ENCODE measurements at regions of chr20 and their contacts with region 1.

Region 1: DNA sequence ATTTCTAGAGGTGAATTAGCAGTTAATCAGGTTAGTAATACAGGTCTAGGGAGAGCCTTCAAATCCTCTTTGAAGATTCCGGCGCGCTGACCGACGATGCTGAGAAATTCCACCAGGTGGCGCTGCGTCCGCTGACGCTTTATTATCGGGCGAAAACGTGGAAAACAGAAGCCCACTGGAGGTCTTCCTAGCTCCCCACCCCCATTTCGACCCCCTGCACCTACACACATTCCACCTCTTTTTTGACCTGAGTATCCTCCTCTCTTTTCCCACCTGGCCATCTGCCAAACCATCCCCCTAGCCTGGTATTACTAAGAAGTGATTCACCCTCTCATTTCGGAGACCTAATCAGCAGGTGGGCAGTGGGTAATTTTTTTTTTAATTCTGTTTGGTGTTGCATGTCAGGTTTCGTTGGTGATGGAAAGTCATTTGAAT is 65.4 kb upstream of the RIN2 start:
- DNase-seq: peak; percentile 77
- ATAC-seq: peak; percentile 62
- H3K4me3 ChIP-seq: no peak overlapping the region
- H3K27ac ChIP-seq: no peak overlapping the region
- H3K4me1 ChIP-seq: peaks cover 2% of the 10 kb centered on the region
- H3K27me3 ChIP-seq: no peaks in the 10 kb centered on the region
- CTCF ChIP-seq: peak; percentile 93

Region 2: GRCh38 chr20:19583532-19584175 is 109.0 kb before region 1 on chr20:
- intact Hi-C with region 1: no loop called
- DNase-seq: peak; percentile 87
- ATAC-seq: peak; percentile 97
- H3K4me3 ChIP-seq: no peak overlapping the region
- H3K27ac ChIP-seq: no peak overlapping the region
- H3K4me1 ChIP-seq: no peaks in the 10 kb centered on the region
- H3K27me3 ChIP-seq: no peaks in the 10 kb centered on the region
- CTCF ChIP-seq: peak; percentile 87

Region 3: GRCh38 chr20:19742974-19743639 is 50.4 kb after region 1 on chr20:
- intact Hi-C with region 1: loop called (anchors 10 kb)
- DNase-seq: peak; percentile 67
- ATAC-seq: peak; percentile 78
- H3K4me3 ChIP-seq: no peak overlapping the region
- H3K27ac ChIP-seq: no peak overlapping the region
- H3K4me1 ChIP-seq: no peaks in the 10 kb centered on the region
- H3K27me3 ChIP-seq: no peaks in the 10 kb centered on the region
- CTCF ChIP-seq: no peak

Region 4: DNA sequence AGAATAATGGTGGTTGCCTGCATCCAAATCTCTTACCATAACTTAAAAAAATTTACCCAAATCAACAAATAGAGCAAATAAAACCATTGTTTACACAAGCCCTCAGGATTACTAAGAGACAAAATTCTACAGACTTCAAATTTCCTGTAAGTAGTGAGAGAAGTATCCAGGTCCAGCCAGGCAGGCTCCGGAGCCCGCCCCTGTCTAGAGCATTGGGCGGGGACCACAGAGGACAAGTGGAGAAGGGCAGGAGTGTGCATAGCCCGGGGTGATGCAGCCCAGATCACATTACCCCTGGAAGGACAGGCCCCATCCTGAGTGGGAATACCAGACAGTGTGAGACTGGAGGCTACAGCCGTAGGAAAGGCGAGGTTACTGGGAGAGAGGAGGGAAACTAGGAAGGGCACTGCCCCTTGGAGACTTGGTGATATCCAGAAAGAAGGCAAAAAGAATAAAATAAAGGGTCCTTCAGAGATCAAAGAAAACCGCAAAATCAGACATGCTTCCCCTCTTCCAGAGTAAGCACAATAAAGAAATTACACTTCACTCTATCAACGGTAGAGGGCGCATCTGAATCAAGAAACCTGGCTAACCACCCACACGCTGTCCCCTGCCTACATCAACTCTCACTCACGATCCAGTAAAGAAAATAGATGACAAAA is 91.9 kb after region 1 on chr20:
- intact Hi-C with region 1: no loop called
- DNase-seq: peak; percentile 80
- ATAC-seq: peak; percentile 91
- H3K4me3 ChIP-seq: no peak overlapping the region
- H3K27ac ChIP-seq: peak overlapping the region; percentile 61
- H3K4me1 ChIP-seq: peaks cover 35% of the 10 kb centered on the region
- H3K27me3 ChIP-seq: no peaks in the 10 kb centered on the region
- CTCF ChIP-seq: peak; percentile 80

Region 5: GRCh38 chr20:19995220-19995863 is 302.6 kb after region 1 on chr20:
- intact Hi-C with region 1: loop called (anchors 10 kb)
- DNase-seq: no peak
- ATAC-seq: peak; percentile 73
- H3K4me3 ChIP-seq: no peak overlapping the region
- H3K27ac ChIP-seq: no peak overlapping the region
- H3K4me1 ChIP-seq: peaks cover 55% of the 10 kb centered on the region
- H3K27me3 ChIP-seq: no peaks in the 10 kb centered on the region
- CTCF ChIP-seq: peak; percentile 79